ENCODE measurements at regions of chr19 and their contacts with region 1.

Region 1: DNA sequence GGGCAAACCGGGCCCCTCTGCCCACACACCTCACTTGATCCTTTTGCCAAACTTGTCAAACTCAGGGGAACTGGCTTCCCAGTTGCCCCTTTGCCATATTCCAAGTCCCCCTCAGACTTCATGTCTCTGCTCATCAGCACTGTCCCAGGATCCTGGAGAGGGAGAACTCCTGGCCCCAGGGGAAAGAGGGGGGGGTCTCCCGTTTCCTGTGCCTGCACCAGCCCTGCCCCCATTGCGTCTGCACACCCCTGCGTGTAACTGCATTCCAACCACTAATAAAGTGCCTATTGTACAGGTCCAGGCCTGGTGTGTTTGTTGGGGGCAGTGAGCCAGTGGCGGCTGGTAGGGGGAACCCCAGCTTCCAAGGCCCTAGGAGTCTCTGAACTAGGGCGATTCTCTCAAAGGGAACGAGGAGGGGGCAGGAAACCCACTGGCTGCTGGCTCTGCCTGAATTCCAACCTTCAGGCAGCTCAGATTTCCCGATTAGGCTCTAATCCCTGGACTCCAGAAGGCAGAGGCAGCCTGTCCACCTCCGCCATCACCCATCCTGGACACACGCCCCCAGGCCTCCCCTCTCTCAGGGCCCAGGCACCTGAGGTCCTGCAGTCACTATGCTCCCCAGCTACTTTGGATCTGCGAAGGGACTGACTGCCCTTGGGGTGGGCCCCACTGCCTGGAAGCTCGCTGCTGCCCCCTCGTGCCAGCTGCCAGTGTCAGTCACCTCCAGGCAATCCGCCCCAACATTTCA is 9.7 kb upstream of the ILF3 start:
- DNase-seq: peak; percentile 84 to 88
- H3K4me3 ChIP-seq: no peak overlapping the region
- H3K27ac ChIP-seq: peak overlapping the region; percentile 82 to 89 (median 83)
- H3K4me1 ChIP-seq: peaks cover 29 to 43% of the 10 kb centered on the region in 2 donors
- H3K27me3 ChIP-seq: no peaks in the 10 kb centered on the region
- CTCF ChIP-seq: peak; percentile 43 to 97 (median 88)
- POLR2A ChIP-seq: no peak

Region 2: GRCh38 chr19:10583036-10583776 is 61.2 kb before region 1 on chr19:
- intact Hi-C with region 1: loop called (anchors 2 kb)
- DNase-seq: no peak
- H3K4me3 ChIP-seq: no peak overlapping the region
- H3K27ac ChIP-seq: no peak overlapping the region
- H3K4me1 ChIP-seq: peaks cover 0 to 11% of the 10 kb centered on the region in 2 donors
- H3K27me3 ChIP-seq: no peaks in the 10 kb centered on the region
- CTCF ChIP-seq: no peak
- POLR2A ChIP-seq: no peak

Region 3: DNA sequence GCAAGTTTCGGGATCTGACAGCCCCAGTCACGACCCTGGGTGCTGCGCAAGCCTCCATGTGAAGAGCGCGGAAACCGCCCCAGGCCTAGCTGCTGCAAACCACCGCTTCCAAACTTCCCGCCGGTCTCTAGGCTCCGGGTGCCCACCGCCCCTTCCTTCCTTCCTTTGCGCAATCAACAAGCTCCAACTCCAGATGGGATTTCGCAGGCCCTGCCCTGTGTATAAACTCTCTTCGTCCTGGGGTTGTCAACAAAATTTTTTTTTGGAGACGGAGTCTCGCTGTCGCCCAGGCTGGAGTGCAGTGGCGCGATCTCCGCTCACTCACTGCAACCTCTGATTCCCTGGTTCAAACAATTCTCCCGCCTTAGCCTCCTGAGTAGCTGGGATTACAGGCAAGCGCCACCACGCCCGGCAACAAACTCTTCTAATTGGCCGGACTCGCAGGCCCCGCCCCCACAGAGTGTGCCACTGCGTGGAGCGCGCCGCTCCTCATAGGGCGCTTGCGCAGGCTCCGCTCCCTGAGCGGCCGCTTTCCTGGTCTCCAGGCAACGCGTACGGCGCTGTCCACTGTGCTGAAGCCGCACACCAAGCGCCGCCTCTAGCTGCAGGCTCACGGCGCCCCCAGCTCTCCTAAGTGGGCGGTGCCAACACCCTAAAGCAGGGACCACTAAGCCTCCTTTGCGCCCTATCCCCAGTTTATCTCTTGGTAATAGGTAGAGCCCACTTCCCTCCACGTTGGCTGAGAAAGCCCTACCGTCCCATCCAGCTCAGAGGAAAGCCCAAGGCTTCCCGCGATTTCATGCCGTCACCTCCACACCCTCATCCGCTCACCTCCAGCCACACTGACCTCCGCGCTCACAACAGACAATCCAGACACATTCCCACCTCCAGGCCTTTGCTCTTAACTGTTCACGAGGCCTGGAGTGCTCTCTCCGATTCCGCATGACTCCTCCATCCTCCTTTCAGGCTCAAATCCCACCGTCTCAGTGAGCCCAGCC is 51.3 kb after region 1 on chr19:
- intact Hi-C with region 1: no loop called
- DNase-seq: peak; percentile 93
- H3K4me3 ChIP-seq: no peak overlapping the region
- H3K27ac ChIP-seq: no peak overlapping the region
- H3K4me1 ChIP-seq: peaks cover 4 to 13% of the 10 kb centered on the region in 2 donors
- H3K27me3 ChIP-seq: no peaks in the 10 kb centered on the region
- CTCF ChIP-seq: no peak
- POLR2A ChIP-seq: no peak